ENCODE measurements at regions of chr14 and their contacts with region 1.

Region 1: DNA sequence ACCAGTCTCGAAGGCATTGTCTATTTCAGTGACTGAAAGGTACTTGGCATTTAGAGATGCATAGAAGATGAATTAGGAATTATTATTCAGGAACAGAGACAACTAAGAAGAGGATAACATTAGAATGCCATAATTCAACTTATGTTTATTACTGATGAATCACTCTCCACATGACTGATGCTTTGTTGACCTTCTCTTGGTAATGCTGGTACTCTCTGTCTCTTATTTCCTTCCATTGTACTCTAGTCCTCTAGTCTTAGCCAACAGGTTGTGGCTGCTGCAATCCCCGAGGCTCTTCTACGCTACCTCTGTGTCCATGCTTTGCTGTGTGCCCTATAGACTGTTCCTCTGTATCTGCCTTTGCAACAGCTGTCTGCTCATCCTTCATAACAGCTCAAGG is 652.9 kb downstream of the NRXN3 start:
- DNase-seq: no peak
- ATAC-seq: no peak
- H3K4me3 ChIP-seq: no peak overlapping the region
- H3K27ac ChIP-seq: no peak overlapping the region
- H3K4me1 ChIP-seq: no peaks in the 10 kb centered on the region
- H3K27me3 ChIP-seq: no peaks in the 10 kb centered on the region
- CTCF ChIP-seq: no peak

Region 2: GRCh38 chr14:78790271-78790670 is 32.8 kb before region 1 on chr14:
- intact Hi-C with region 1: loop called in 1 of 10 experiments (anchors 2 kb)
- DNase-seq: no peak
- ATAC-seq: no peak
- H3K4me3 ChIP-seq: no peak overlapping the region
- H3K27ac ChIP-seq: no peak overlapping the region
- H3K4me1 ChIP-seq: no peaks in the 10 kb centered on the region
- H3K27me3 ChIP-seq: peaks cover 0 to 18% (median 0%) of the 10 kb centered on the region in 7 donors
- CTCF ChIP-seq: no peak

Region 3: DNA sequence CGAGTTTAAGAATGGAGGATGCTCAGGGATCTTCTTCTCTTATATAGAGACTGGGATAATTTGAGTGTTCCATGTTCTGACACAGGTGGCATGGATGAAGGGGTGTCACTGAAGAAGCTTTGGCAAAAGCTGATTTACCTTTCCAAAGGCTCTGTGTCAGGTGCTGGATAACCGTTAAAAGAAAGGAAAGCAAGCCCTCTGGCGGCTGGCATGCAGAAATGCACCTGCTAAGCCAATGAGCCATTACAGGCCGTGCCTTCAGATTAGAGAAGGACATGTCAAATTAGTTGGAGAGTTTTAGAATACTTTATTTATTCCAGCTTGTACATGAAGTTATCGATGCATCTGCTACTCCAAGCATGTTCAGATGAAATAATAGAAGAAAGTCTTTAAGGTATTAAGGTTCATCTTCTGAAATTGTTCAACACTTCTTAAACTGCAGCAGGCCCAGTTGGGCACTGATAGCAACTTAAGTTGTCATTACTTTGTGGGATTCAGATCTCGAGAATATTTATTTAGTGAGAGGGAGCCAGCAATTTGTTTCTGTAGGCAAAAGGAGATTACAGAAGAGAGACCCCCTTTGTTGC is 25.3 kb after region 1 on chr14:
- intact Hi-C with region 1: no loop called
- DNase-seq: peak in 1 of 2 donors; percentile 8
- ATAC-seq: no peak
- H3K4me3 ChIP-seq: no peak overlapping the region
- H3K27ac ChIP-seq: no peak overlapping the region
- H3K4me1 ChIP-seq: no peaks in the 10 kb centered on the region
- H3K27me3 ChIP-seq: no peaks in the 10 kb centered on the region
- CTCF ChIP-seq: peak; percentile 38 to 79 (median 75)

Region 4: DNA sequence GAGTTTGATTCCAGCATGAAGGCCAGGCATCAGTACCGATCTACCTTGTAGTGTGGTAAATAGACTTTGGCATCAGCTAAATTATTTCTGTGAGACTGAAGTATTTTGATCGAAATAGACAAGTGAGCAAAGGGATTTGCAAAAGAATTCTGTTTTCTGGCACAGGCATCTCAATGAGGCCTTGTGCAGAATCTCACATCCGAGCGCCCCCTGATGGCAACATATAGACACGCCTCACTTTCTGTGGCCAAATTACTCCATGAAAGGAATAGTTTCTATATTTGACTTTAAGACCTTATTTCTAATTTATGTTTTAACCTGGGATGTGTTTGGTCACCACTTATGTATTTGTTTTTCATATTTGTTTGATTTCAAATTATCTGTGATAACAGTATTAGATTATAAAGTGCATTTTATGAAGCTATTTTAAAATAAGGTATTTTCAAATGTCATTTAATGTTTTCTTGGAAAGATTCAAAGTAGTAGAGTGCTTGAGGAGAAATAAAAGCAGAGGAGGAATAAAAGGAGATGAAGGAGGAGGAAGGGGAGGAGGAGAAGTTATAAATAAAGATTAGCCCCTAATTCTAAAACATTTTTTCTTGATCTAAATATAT is 79.1 kb after region 1 on chr14:
- intact Hi-C with region 1: no loop called
- DNase-seq: peak in 1 of 2 donors; percentile 8
- ATAC-seq: no peak
- H3K4me3 ChIP-seq: no peak overlapping the region
- H3K27ac ChIP-seq: no peak overlapping the region
- H3K4me1 ChIP-seq: no peaks in the 10 kb centered on the region
- H3K27me3 ChIP-seq: no peaks in the 10 kb centered on the region
- CTCF ChIP-seq: peak in 6 of 9 donors; percentile 30 to 52 (median 43)